ENCODE measurements at regions of chr4 and their contacts with region 1.

Region 1: DNA sequence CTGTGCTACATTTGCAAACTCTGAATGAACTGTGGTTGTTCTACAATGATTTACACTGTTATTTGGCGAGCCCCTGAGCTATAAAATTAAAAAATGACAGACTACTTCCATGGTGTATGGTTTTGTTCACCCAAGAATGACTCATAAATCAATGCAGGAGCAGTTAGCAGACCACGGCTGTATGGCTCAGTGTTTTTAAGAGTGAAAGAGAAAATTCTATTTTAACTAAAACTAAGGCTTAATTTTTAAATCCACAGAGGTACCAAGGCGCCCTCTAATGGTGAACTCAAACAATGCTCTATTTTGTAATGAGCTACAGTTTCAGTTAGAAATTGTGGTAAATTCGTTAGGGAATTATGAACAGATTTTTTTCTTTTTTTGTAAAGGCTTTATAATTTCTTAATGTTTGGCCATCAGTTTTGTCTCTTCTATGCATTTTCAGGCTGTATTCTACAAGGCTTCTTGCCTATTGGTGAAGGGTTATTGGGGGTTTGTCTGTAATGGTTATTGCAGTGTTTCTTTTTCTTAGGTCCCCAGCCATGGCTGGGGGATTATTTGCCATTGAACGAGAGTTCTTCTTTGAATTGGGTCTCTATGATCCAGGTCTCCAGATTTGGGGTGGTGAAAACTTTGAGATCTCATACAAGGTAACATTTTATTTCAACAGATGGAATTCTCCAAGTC is 32.5 kb downstream of the HMGB2 start:
- DNase-seq: no peak
- ATAC-seq: peak; percentile 58
- H3K4me3 ChIP-seq: no peak overlapping the region
- H3K27ac ChIP-seq: no peak overlapping the region
- H3K4me1 ChIP-seq: no peaks in the 10 kb centered on the region
- H3K27me3 ChIP-seq: no peaks in the 10 kb centered on the region
- CTCF ChIP-seq: peak; percentile 58 to 70 (median 60)
- EP300 ChIP-seq: no peak
- POLR2A ChIP-seq: no peak
- RAD21 ChIP-seq: peak; percentile 75

Region 2: DNA sequence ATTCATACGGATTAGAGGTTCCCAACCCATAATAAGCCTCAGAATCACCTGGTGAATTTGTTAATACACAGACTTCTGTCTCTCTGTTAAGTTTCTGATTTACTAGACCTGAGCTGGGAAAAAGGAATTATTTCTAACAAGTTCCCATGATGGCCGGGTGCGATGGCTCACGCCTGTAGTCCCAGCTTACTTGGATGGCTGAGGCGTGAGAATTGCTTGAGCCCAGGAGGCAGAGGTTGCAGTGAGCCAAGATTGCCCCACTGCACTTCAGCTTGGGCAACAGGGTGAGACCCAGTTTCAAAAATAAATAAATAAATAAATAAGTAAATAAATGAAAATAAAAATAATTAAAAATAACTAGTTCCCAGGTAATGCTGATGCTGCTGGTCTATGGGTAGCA is 1076.2 kb before region 1 on chr4:
- CTCF ChIA-PET with region 1: no interaction called
- POLR2A ChIA-PET with region 1: no interaction called
- RAD21 ChIA-PET with region 1: no interaction called
- SMC1A ChIA-PET with region 1: no interaction called
- in situ Hi-C with region 1: no loop called
- intact Hi-C with region 1: no loop called
- DNase-seq: no peak
- ATAC-seq: no peak
- H3K4me3 ChIP-seq: no peak overlapping the region
- H3K27ac ChIP-seq: no peak overlapping the region
- H3K4me1 ChIP-seq: no peaks in the 10 kb centered on the region
- H3K27me3 ChIP-seq: no peaks in the 10 kb centered on the region
- CTCF ChIP-seq: no peak
- EP300 ChIP-seq: no peak
- POLR2A ChIP-seq: no peak
- RAD21 ChIP-seq: no peak

Region 3: GRCh38 chr4:173019711-173020110 is 281.9 kb before region 1 on chr4:
- CTCF ChIA-PET with region 1: interaction called, 48 read pairs
- POLR2A ChIA-PET with region 1: no interaction called
- RAD21 ChIA-PET with region 1: interaction called, 31 read pairs
- SMC1A ChIA-PET with region 1: interaction called, 27 read pairs
- in situ Hi-C with region 1: no loop called
- intact Hi-C with region 1: no loop called
- DNase-seq: no peak
- ATAC-seq: no peak
- H3K4me3 ChIP-seq: no peak overlapping the region
- H3K27ac ChIP-seq: no peak overlapping the region
- H3K4me1 ChIP-seq: no peaks in the 10 kb centered on the region
- H3K27me3 ChIP-seq: no peaks in the 10 kb centered on the region; a peak in 1 of 4 replicates
- CTCF ChIP-seq: no peak
- EP300 ChIP-seq: no peak
- POLR2A ChIP-seq: no peak
- RAD21 ChIP-seq: no peak

Region 4: GRCh38 chr4:173168396-173169177 is 133.1 kb before region 1 on chr4 and contains the start of gene GALNT7:
- CTCF ChIA-PET with region 1: interaction called, 10 read pairs
- POLR2A ChIA-PET with region 1: no interaction called
- RAD21 ChIA-PET with region 1: interaction called, 4 read pairs
- SMC1A ChIA-PET with region 1: no interaction called
- in situ Hi-C with region 1: no loop called
- intact Hi-C with region 1: no loop called
- DNase-seq: no peak
- ATAC-seq: peak; percentile 62
- H3K4me3 ChIP-seq: peak within 1 kb of the TSS; percentile 99
- H3K27ac ChIP-seq: peak within 1 kb of the TSS; percentile 94
- H3K4me1 ChIP-seq: peaks cover 18% of the 10 kb centered on the region
- H3K27me3 ChIP-seq: no peaks in the 10 kb centered on the region
- CTCF ChIP-seq: no peak
- EP300 ChIP-seq: no peak
- POLR2A ChIP-seq: peak; percentile 66
- RAD21 ChIP-seq: no peak
- polyA plus RNA-seq, gene GALNT7: 14.2 to 14.8 TPM

Region 5: DNA sequence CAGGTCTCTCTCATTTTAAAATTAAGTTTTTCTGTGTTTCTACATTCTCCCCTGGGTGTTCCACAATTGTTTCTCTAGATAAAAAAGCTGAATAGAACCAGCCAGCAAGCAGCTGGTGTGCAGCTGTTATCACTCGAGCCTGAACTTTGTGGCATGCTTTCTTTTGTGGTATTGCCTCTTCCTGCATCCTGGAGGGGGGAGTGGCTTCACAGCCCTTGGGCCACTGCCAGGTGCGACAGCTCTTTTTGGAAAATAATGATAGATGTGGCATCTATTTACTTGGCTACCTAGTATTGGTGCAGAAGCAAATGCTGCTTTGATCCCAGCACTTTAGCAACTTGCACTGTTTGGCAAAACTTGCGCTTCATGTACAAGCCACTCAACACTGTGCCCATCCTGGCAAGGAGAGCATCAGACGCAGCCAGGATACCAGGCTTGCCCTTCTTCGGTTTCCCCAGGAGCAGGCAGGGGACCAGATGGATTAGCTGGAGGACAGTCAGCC is 36.9 kb before region 1 on chr4:
- CTCF ChIA-PET with region 1: interaction called, 66 read pairs
- POLR2A ChIA-PET with region 1: no interaction called
- RAD21 ChIA-PET with region 1: interaction called, 12 read pairs
- SMC1A ChIA-PET with region 1: interaction called, 4 read pairs
- in situ Hi-C with region 1: no loop called
- intact Hi-C with region 1: no loop called
- DNase-seq: no peak
- ATAC-seq: peak; percentile 74
- H3K4me3 ChIP-seq: no peak overlapping the region
- H3K27ac ChIP-seq: no peak overlapping the region
- H3K4me1 ChIP-seq: peaks cover 4% of the 10 kb centered on the region; the same call in 1 of the 2 replicates
- H3K27me3 ChIP-seq: no peaks in the 10 kb centered on the region
- CTCF ChIP-seq: no peak
- EP300 ChIP-seq: no peak; a peak in 1 of 4 replicates
- POLR2A ChIP-seq: no peak
- RAD21 ChIP-seq: no peak

Region 6: GRCh38 chr4:173288296-173288695 is 13.4 kb before region 1 on chr4:
- CTCF ChIA-PET with region 1: interaction called, 146 read pairs
- POLR2A ChIA-PET with region 1: interaction called, 3 read pairs
- RAD21 ChIA-PET with region 1: interaction called, 18 read pairs
- SMC1A ChIA-PET with region 1: interaction called, 21 read pairs
- in situ Hi-C with region 1: no loop called
- intact Hi-C with region 1: no loop called
- DNase-seq: peak; percentile 24
- ATAC-seq: peak; percentile 88
- H3K4me3 ChIP-seq: no peak overlapping the region
- H3K27ac ChIP-seq: no peak overlapping the region
- H3K4me1 ChIP-seq: peaks cover 5% of the 10 kb centered on the region; the same call in 1 of the 2 replicates
- H3K27me3 ChIP-seq: no peaks in the 10 kb centered on the region
- CTCF ChIP-seq: peak; percentile 60 to 67 (median 65)
- EP300 ChIP-seq: no peak
- POLR2A ChIP-seq: no peak
- RAD21 ChIP-seq: peak; percentile 63

Region 7: DNA sequence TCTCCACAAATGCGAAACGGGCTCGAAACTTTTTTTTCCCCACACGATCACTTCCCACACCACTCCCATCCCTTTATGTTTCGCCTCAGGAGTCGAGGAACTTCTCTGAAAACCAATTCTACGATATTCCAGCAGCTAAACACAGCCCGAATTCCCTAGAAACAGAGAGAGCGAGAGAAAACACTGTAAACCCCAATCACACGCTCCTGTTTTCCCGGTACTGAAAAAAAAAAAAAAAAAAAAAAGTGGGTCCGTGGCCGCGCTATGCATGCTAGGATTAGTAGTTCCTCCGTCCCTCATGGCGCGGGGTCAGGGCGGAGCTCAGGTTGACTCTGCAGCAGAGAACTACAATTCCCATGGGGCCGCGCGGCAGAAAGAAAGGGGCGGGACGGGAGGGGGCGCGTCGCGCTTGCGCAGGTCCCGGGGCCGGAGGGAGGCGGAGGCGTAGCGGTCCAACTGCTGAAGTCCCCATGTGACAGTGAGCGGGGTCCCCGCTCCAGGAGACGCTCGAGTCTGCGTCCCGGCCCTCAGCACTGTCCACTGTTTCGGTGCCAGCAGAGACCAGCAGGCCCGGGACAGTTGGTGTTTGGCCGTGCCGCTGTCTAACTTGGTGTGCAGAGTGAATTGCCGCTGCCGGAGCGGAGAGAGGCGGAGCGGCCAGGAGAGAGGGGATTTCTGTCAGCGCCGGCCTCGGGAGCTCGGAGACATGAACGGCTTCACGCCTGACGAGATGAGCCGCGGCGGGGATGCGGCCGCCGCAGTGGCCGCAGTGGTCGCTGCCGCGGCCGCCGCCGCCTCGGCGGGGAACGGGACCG is 69.0 kb after region 1 on chr4 and contains the start of gene SAP30:
- CTCF ChIA-PET with region 1: interaction called, 13 read pairs
- POLR2A ChIA-PET with region 1: interaction called, 5 read pairs
- RAD21 ChIA-PET with region 1: interaction called, 4 read pairs
- SMC1A ChIA-PET with region 1: interaction called, 4 read pairs
- in situ Hi-C with region 1: no loop called
- intact Hi-C with region 1: no loop called
- DNase-seq: peak; percentile 89
- ATAC-seq: peak; percentile 86
- H3K4me3 ChIP-seq: peak within 1 kb of the TSS; percentile 99
- H3K27ac ChIP-seq: peak within 1 kb of the TSS; percentile 84
- H3K4me1 ChIP-seq: peaks cover 8% of the 10 kb centered on the region
- H3K27me3 ChIP-seq: no peaks in the 10 kb centered on the region
- CTCF ChIP-seq: no peak
- EP300 ChIP-seq: no peak
- POLR2A ChIP-seq: peak; percentile 97
- RAD21 ChIP-seq: no peak
- polyA plus RNA-seq, gene SAP30: 5.4 to 24.0 TPM

Region 8: GRCh38 chr4:173420324-173420752 is 118.7 kb after region 1 on chr4:
- CTCF ChIA-PET with region 1: interaction called, 23 read pairs
- POLR2A ChIA-PET with region 1: no interaction called
- RAD21 ChIA-PET with region 1: interaction called, 7 read pairs
- SMC1A ChIA-PET with region 1: interaction called, 9 read pairs
- in situ Hi-C with region 1: no loop called
- intact Hi-C with region 1: no loop called
- DNase-seq: no peak
- ATAC-seq: peak; percentile 71
- H3K4me3 ChIP-seq: no peak overlapping the region
- H3K27ac ChIP-seq: no peak overlapping the region
- H3K4me1 ChIP-seq: no peaks in the 10 kb centered on the region
- H3K27me3 ChIP-seq: no peaks in the 10 kb centered on the region
- CTCF ChIP-seq: peak; percentile 21 to 48 (median 39); a peak in 2 of 6 replicates
- EP300 ChIP-seq: no peak
- POLR2A ChIP-seq: no peak
- RAD21 ChIP-seq: peak; percentile 57